Endothelial cell of umbilical vein (primary cell): ENCODE measurements at regions of chr1 and their contacts with region 1.

Region 1: DNA sequence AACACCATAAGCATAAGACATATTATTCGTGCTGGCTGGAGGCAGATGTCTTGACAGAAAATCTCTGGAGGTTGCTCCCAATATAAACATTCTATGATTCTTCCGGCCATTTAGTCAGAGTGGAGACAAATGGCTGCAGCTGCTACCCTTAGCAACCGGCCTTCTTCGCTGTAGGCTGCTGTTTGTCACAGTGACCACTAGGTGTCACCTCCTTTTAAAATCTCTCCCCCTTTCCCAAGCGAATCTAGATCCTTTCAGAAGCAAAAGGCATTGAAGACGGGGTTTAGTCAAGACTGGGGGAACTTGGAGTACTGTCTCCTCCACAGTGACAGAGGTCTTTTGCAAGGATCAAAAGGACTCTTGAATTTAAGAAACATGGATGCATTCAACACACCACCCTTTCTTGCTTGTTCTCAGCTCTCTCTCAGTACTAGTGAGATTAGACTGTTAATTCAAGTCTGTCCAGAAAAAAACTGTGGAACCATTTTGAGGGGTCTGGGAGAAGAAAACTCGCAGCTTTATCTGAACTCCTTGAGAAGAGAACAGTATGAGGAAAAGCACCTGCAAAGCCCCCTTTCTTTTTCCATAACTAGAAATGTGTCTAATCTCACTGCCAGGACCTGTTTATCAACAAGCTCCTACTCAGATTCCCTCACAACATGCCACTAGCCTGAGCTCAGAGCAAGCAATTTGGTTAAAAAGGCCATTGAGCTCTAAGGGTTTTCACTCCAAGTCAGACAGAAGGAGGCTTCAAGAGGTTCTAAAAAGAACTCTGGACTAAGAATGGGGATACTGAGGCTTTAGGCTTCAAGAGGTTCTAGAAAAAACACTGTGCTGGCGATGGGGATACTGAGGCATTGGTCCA is 408.3 kb upstream of the PLXNA2 start:
- DNase-seq: peak; percentile 88
- H3K4me3 ChIP-seq: no peak overlapping the region
- H3K27ac ChIP-seq: no peak overlapping the region
- H3K4me1 ChIP-seq: no peaks in the 10 kb centered on the region
- H3K27me3 ChIP-seq: peaks cover 3 to 6% of the 10 kb centered on the region in 2 experiments
- CTCF ChIP-seq: peak; percentile 78 to 83
- POLR2A ChIP-seq: no peak

Region 2: GRCh38 chr1:208942394-208943130 is 290.0 kb after region 1 on chr1:
- CTCF ChIA-PET with region 1: no interaction called
- POLR2A ChIA-PET with region 1: no interaction called
- dilution Hi-C with region 1: no loop called
- intact Hi-C with region 1: loop called (anchors 2 kb)
- DNase-seq: peak; percentile 53
- H3K4me3 ChIP-seq: no peak overlapping the region
- H3K27ac ChIP-seq: no peak overlapping the region
- H3K4me1 ChIP-seq: peaks cover 32% of the 10 kb centered on the region
- H3K27me3 ChIP-seq: no peaks in the 10 kb centered on the region
- CTCF ChIP-seq: no peak
- POLR2A ChIP-seq: no peak

Region 3: DNA sequence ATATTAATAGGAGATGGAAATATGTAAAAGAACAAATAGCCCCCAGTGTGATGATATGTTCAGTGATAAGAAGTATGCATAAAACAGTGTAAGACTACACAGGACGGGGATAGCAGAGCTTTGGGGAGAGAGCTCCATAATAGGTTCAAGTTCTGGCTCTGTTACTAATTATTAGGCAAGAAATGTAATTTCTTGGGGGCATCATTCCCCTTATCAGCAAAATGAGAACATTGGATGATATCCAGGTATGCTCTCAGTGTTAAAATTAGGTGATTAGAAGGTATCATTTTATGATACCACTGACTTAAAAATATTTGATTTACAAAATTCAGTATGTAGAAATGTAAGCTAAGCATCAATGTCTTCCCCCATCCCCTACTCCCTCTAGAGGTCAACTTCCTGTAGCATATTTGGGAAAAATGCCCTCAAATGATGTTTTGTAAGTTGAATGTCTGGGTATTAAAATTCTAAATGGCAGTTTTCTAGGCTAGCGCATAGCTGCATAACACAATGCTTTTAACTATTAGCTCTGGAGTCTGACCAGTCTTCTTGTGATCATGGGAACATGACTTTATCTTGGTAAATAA is 345.3 kb after region 1 on chr1:
- CTCF ChIA-PET with region 1: interaction called, 23 read pairs
- POLR2A ChIA-PET with region 1: no interaction called
- dilution Hi-C with region 1: no loop called
- intact Hi-C with region 1: loop called (anchors 1 kb)
- DNase-seq: peak; percentile 15
- H3K4me3 ChIP-seq: no peak overlapping the region
- H3K27ac ChIP-seq: no peak overlapping the region
- H3K4me1 ChIP-seq: no peaks in the 10 kb centered on the region
- H3K27me3 ChIP-seq: no peaks in the 10 kb centered on the region
- CTCF ChIP-seq: peak; percentile 20 to 32
- POLR2A ChIP-seq: no peak

Region 4: GRCh38 chr1:209029737-209030136 is 377.2 kb after region 1 on chr1:
- CTCF ChIA-PET with region 1: no interaction called
- POLR2A ChIA-PET with region 1: no interaction called
- dilution Hi-C with region 1: no loop called
- intact Hi-C with region 1: loop called (anchors 1 kb)
- DNase-seq: peak; percentile 17
- H3K4me3 ChIP-seq: no peak overlapping the region
- H3K27ac ChIP-seq: no peak overlapping the region
- H3K4me1 ChIP-seq: no peaks in the 10 kb centered on the region
- H3K27me3 ChIP-seq: peaks cover 3 to 6% of the 10 kb centered on the region in 2 experiments
- CTCF ChIP-seq: peak in 1 of 2 donors; percentile 14
- POLR2A ChIP-seq: no peak

Region 5: DNA sequence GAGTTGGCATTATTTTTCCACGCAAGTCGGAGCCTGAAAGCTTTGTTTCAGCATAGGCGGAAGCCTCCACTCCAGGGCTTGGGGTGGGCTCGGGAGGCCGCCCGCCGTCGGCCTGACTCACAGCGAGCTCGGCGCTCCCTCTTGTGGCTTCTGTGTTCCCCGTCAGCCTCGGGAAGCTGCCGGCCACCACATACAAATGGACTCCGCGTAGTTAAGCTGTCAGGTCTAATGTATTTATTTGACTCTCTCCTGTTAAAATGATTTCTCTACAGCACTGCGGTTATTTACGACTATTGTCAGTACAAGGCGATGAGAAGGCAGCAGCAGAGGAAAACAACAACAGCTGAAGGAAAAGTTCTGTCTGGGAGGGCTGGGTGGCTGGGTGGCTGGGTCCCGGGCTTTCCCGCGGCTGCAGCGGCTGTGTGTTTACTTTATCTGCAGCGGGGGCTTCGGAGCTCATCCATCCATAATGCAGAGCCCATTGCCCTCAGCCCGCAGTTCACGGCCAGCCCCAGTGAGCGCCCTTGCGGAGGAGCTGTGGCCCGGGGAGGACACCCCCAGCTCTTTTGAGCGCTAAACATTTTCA is 555.3 kb after region 1 on chr1:
- CTCF ChIA-PET with region 1: interaction called, 60 read pairs
- POLR2A ChIA-PET with region 1: no interaction called
- dilution Hi-C with region 1: no loop called
- intact Hi-C with region 1: loop called (anchors 1 kb)
- DNase-seq: peak; percentile 73
- H3K4me3 ChIP-seq: no peak overlapping the region
- H3K27ac ChIP-seq: no peak overlapping the region
- H3K4me1 ChIP-seq: no peaks in the 10 kb centered on the region
- H3K27me3 ChIP-seq: peaks cover 16 to 23% of the 10 kb centered on the region in 2 experiments
- CTCF ChIP-seq: peak; percentile 77 to 87
- POLR2A ChIP-seq: no peak

Region 6: DNA sequence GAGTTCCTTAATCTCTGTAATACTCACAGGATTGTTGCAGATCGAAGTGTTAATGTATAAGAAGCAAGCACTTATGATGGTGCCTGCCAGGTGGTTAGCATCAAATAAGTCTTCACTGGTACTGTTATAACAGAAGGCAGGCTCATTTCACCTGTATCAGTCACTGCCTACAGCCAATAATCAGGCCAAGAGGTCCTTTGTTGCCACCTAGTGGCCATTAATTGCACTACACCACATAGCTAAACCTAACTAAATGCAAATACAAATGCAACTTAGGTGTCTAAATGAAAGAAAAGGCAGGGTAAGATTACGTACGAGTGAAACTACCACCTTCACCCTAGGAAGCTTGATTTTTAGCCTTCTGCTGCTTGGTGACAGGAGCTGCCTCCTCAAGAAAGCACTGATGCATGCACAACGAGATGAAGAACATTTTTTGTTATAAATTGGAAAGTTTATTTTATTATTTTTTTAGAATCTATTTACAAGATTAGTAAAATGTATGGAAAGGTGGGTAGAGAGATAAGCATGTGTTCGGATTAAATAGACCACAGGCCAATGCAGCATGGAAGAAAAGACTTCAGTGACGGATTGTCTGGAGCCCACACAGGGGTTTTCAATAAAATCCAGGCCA is 596.2 kb after region 1 on chr1:
- CTCF ChIA-PET with region 1: interaction called, 19 read pairs
- POLR2A ChIA-PET with region 1: no interaction called
- dilution Hi-C with region 1: no loop called
- intact Hi-C with region 1: loop called (anchors 1 kb)
- DNase-seq: peak; percentile 74
- H3K4me3 ChIP-seq: no peak overlapping the region
- H3K27ac ChIP-seq: no peak overlapping the region
- H3K4me1 ChIP-seq: no peaks in the 10 kb centered on the region
- H3K27me3 ChIP-seq: peaks cover 0 to 2% of the 10 kb centered on the region in 2 experiments
- CTCF ChIP-seq: peak; percentile 67 to 76
- POLR2A ChIP-seq: no peak